ENCODE measurements at regions of chr16 and their contacts with region 1.

Region 1: GRCh38 chr16:31142109-31143010 is 6.8 kb upstream of the PRSS8 start:
- DNase-seq: peak; percentile 97 to 99
- ATAC-seq: peak; percentile 82 to 89
- H3K4me3 ChIP-seq: peak overlapping the region; percentile 50
- H3K27ac ChIP-seq: peak overlapping the region; percentile 90 to 95
- H3K4me1 ChIP-seq: peaks cover 30% of the 10 kb centered on the region
- CTCF ChIP-seq: peak; percentile 96
- EP300 ChIP-seq: no peak
- POLR2A ChIP-seq: peak; percentile 52
- RAD21 ChIP-seq: peak; percentile 69 to 88

Region 2: DNA sequence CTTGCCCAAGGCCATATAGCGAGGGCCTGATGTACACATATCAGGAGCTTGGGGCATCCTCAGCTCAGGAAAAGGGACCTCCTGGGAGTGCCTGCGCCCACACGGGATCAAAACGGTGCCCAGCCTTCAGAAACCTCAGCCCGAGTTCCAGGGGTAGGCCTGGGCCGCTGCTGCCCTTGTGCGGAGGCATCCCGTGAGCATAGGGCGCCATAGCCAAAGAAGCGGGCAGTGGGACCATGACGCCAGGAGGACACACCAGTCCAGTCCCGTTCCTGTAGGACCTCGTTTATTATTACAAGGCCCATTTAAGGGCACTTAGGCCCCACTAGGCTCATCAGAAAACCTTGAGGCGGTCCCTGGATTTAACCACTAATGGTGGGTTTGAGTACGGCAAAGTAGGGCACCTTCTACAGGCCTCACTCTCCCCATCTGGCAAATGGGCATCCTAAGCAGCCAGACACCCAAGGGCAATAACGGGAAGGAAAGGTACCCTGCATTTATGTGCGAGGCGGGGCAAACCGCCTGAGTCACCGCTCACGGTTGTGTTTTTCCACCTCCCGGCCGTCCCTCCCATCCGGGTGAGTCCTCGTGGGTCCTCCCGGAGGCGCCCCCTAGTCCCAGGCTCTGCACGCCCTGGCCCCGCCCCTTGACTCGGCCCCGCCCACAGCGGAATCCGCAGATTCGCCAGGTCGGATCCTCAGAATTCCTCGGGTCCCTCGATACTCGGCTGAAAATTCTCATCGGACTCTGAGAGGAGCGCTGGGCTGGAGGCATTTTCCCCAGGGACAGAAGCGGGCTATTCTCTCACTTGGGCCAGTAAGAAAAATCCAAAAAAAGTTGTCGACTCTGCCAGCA is 185.5 kb before region 1 on chr16:
- CTCF ChIA-PET with region 1: interaction called, 13 read pairs
- POLR2A ChIA-PET with region 1: interaction called, 5 read pairs
- DNase-seq: peak; percentile 79 to 91
- ATAC-seq: peak; percentile 65 to 80
- H3K4me3 ChIP-seq: peak overlapping the region; percentile 77
- H3K27ac ChIP-seq: peak overlapping the region; percentile 98 to 100
- H3K4me1 ChIP-seq: peaks cover 22% of the 10 kb centered on the region
- CTCF ChIP-seq: 0 out of 3 replicates have a peak, but pooled peaks have one; percentile 25
- EP300 ChIP-seq: no peak
- POLR2A ChIP-seq: no peak; the same call in none of the 2 replicates
- RAD21 ChIP-seq: no peak

Region 3: DNA sequence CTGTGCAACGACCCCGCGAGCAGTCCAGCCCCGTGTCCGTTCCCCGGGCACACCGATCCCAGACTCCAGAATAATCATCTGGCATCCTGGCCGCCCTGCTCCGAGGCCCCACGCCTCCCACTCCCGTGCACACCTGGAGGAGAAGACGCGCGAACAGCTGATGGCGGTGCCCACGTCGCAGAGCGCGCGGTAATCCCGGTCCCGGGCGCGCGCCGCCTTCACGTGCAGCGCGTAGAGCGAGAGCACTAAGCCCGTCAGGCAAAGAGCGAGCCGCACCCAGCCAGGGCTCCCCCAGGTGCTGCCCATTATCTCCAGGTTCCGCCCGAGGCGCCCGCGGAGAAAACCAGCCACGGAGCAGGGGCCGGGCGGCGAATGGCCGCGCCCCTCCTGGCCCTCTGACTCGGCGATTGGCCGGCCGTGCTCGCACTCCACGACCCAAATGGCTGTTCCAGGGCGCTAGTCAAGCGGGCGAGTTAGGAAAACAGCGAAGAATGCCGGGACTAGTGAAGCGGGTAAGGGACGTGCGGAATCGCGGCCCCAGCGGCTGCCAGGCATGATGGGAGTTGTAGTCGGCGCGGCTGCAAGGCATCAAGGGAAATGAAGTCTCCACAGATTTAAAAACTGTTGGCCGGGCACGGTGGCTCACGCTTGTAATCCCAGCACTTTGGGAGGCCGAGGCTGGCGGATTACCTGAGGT is 47.8 kb before region 1 on chr16 and contains the start of gene VKORC1:
- CTCF ChIA-PET with region 1: interaction called, 28 read pairs
- POLR2A ChIA-PET with region 1: interaction called, 8 read pairs
- DNase-seq: peak; percentile 95 to 99
- ATAC-seq: peak; percentile 94 to 98
- H3K4me3 ChIP-seq: peak within 1 kb of the TSS; percentile 83
- H3K27ac ChIP-seq: peak within 1 kb of the TSS; percentile 82 to 89
- H3K4me1 ChIP-seq: peaks cover 11% of the 10 kb centered on the region; the same call in 2 of the 3 replicates
- CTCF ChIP-seq: no peak
- EP300 ChIP-seq: no peak
- POLR2A ChIP-seq: peak; percentile 62
- RAD21 ChIP-seq: no peak
- polyA plus RNA-seq, gene VKORC1: 101 and 136 TPM in 2 replicates

Region 4: GRCh38 chr16:31117391-31118197 is 24.8 kb before region 1 on chr16 and contains the start of gene KAT8:
- CTCF ChIA-PET with region 1: interaction called, 166 read pairs
- POLR2A ChIA-PET with region 1: interaction called, 73 read pairs
- DNase-seq: peak; percentile 96 to 98
- ATAC-seq: peak; percentile 96 to 97
- H3K4me3 ChIP-seq: peak within 1 kb of the TSS; percentile 57
- H3K27ac ChIP-seq: peak within 1 kb of the TSS; percentile 91 to 93
- H3K4me1 ChIP-seq: peaks cover 17% of the 10 kb centered on the region
- CTCF ChIP-seq: no peak
- EP300 ChIP-seq: no peak
- POLR2A ChIP-seq: peak; percentile 65
- RAD21 ChIP-seq: 0 out of 5 replicates have a peak, but pooled peaks of 1 of the 2 experiments have one; percentile 20
- polyA plus RNA-seq, gene KAT8: 42.2 and 52.9 TPM in 2 replicates

Region 5: GRCh38 chr16:31157136-31157535 is 14.8 kb after region 1 on chr16:
- CTCF ChIA-PET with region 1: interaction called, 46 read pairs
- POLR2A ChIA-PET with region 1: interaction called, 3 read pairs
- DNase-seq: no peak
- ATAC-seq: no peak
- H3K4me3 ChIP-seq: no peak overlapping the region
- H3K27ac ChIP-seq: no peak overlapping the region
- H3K4me1 ChIP-seq: no peaks in the 10 kb centered on the region
- CTCF ChIP-seq: no peak
- EP300 ChIP-seq: no peak
- POLR2A ChIP-seq: no peak
- RAD21 ChIP-seq: no peak

Measured in A549 (cell line).